ENCODE measurements at regions of chr13 and their contacts with region 1.

Region 1: DNA sequence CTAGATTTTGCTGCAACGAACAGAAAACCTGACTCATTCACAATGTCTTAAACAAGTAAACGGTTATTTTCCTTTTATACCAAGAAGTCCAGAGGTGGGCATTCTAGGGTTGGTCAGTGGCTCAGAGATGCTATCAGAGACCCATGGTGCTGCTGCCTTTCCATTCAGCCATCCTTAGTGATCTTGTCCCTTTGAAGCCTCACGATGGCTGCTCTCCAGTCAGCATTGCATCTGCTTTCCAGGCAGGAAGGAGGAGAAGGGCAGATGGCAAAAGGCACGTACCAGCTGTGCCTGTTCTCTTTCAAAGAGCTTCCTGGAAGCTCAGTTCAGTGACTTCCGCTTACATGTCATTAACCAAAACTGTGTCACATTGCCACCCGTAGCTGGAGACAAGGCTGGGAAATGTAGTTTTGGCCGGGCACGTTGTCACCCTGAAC is 30.1 kb downstream of the WDFY2 start:
- DNase-seq: peak in 1 of 2 donors; percentile 63
- H3K4me3 ChIP-seq: no peak overlapping the region
- H3K27ac ChIP-seq: peak overlapping the region; percentile 44 to 58
- H3K4me1 ChIP-seq: peaks cover 8 to 27% of the 10 kb centered on the region in 2 donors
- H3K27me3 ChIP-seq: no peaks in the 10 kb centered on the region
- CTCF ChIP-seq: no peak

Region 2: GRCh38 chr13:51222037-51222685 is 392.2 kb before region 1 on chr13 and contains the start of gene FAM124A:
- intact Hi-C with region 1: no loop called
- DNase-seq: peak in 1 of 2 donors; percentile 67
- H3K4me3 ChIP-seq: peak within 1 kb of the TSS; percentile 82 to 92
- H3K27ac ChIP-seq: peak within 1 kb of the TSS in 1 of 2 donors; percentile 12
- H3K4me1 ChIP-seq: no peaks in the 10 kb centered on the region
- H3K27me3 ChIP-seq: no peaks in the 10 kb centered on the region
- CTCF ChIP-seq: peak in 1 of 3 experiments; percentile 60
- total RNA-seq, gene FAM124A: 22.4 TPM

Region 3: DNA sequence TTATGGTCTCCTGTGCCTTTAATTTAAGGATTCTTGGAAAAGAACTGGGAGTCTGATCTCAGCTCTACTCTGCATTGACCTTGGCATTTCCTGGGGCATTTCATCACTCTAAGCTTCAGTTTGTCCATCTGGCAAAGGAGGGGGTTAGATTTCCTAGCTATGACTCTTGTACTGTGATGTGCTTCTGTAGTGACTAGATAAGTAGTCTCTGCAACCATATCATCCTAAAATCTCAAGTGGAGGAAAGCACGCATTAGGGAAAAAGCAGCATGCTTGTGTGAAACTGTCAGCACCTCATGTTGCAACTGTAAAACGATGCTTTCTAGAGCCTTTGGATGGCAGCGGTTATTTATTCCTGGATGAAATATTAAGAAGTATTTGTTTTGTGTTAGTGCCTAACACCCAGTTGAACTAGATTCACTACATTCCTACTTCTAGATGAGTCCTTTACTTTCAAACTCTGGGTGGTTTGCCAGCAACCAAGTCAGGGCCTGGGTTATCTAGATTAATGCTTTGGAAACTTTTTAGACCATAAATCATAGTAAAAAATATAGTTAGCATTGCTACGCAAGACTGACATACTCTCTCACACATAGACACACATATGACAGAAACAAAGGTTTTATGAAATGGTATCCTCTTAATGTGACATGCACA is 23.3 kb before region 1 on chr13:
- intact Hi-C with region 1: loop called (anchors 2 kb)
- DNase-seq: peak in 1 of 2 donors; percentile 63
- H3K4me3 ChIP-seq: peak overlapping the region in 1 of 2 donors; percentile 6
- H3K27ac ChIP-seq: peak overlapping the region; percentile 55 to 58
- H3K4me1 ChIP-seq: peaks cover 0 to 26% of the 10 kb centered on the region in 2 donors
- H3K27me3 ChIP-seq: no peaks in the 10 kb centered on the region
- CTCF ChIP-seq: no peak